ENCODE measurements at regions of chr12 and their contacts with region 1.

Region 1: GRCh38 chr12:26119391-26119981 is 5.4 kb downstream of the BHLHE41 start:
- DNase-seq: peak; percentile 70
- ATAC-seq: no peak
- H3K4me3 ChIP-seq: no peak overlapping the region
- H3K4me3 Mint-ChIP-seq: peak overlapping the region; percentile 53
- H3K27ac ChIP-seq: peak overlapping the region in 1 of 2 donors; percentile 6
- H3K27ac Mint-ChIP-seq: peak overlapping the region; percentile 57
- H3K4me1 ChIP-seq: peaks cover 66 to 72% of the 10 kb centered on the region in 2 donors
- H3K4me1 Mint-ChIP-seq: peaks cover 74% of the 10 kb centered on the region
- H3K27me3 ChIP-seq: peaks cover 0 to 10% (median 0%) of the 10 kb centered on the region in 4 experiments
- H3K27me3 Mint-ChIP-seq: no peaks in the 10 kb centered on the region
- CTCF ChIP-seq: peak; percentile 62

Region 2: DNA sequence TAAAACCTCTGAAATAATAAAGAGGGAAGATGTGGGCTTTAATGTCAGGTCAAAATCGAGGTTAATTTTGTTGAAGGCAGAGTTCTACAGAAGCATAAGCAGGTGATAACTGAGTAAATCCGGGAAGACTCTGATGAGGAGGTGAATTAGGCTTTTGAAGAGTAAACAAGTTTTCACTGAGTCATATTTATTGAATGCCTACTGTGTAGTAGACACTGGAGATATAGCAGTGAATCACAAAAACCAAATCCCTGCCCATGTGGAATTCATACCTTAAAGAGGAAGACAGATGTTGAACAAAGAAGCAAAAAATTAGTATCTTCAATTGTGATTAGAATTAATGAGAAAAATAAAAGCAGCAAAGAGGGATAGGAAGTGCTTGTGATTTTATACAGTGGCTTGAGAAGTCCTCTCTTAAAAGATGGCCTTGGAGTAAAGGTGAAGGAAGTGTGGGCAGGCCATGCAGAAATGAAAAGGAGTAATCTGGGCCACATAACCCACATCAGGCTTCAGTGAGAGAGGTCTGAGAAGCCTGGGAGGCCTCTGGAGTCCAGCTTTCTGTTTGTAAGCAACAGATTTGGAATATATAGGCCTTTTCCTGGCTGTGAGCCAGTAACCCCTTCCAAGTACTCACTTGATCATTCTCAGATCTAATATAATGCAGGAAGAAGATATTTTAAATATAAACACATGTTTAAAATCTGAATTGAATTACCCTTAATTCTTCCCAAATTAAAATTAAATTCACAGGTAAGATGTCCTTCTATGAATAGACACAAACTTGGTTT is 41.4 kb before region 1 on chr12:
- CTCF ChIA-PET with region 1: no interaction called
- POLR2A ChIA-PET with region 1: no interaction called
- intact Hi-C with region 1: no loop called
- DNase-seq: no peak
- ATAC-seq: no peak
- H3K4me3 ChIP-seq: no peak overlapping the region
- H3K4me3 Mint-ChIP-seq: no peak overlapping the region
- H3K27ac ChIP-seq: no peak overlapping the region
- H3K27ac Mint-ChIP-seq: no peak overlapping the region
- H3K4me1 ChIP-seq: no peaks in the 10 kb centered on the region
- H3K4me1 Mint-ChIP-seq: no peaks in the 10 kb centered on the region
- H3K27me3 ChIP-seq: no peaks in the 10 kb centered on the region
- H3K27me3 Mint-ChIP-seq: no peaks in the 10 kb centered on the region
- CTCF ChIP-seq: no peak

Region 3: GRCh38 chr12:26274441-26275312 is 155.2 kb after region 1 on chr12:
- CTCF ChIA-PET with region 1: interaction called, 12 read pairs
- POLR2A ChIA-PET with region 1: interaction called, 7 read pairs
- intact Hi-C with region 1: loop called (anchors 1 kb)
- DNase-seq: peak; percentile 58
- ATAC-seq: peak; percentile 96
- H3K4me3 ChIP-seq: no peak overlapping the region
- H3K4me3 Mint-ChIP-seq: peak overlapping the region; percentile 18
- H3K27ac ChIP-seq: no peak overlapping the region
- H3K27ac Mint-ChIP-seq: peak overlapping the region; percentile 78
- H3K4me1 ChIP-seq: peaks cover 16 to 28% of the 10 kb centered on the region in 2 donors
- H3K4me1 Mint-ChIP-seq: peaks cover 43% of the 10 kb centered on the region
- H3K27me3 ChIP-seq: no peaks in the 10 kb centered on the region
- H3K27me3 Mint-ChIP-seq: no peaks in the 10 kb centered on the region
- CTCF ChIP-seq: no peak

Region 4: DNA sequence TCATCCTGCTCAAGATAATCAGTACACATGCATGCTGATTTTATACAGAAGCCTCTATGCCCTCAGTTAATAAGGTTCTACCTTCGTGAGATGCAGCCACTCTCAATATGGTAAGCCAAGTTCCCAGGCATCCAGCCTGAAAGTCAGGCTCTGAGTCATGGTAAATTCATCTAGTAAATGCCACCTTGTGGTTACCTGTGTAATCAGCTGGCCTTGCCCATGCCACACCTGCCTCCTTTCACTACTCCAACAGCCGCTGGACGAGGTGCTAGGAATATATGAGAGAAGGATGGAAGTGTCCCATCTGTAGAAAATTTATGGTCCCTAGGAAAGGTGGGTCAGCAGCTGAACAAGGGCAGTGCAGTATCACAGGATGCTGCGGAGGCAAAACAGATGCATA is 283.2 kb after region 1 on chr12:
- CTCF ChIA-PET with region 1: interaction called, 55 read pairs
- POLR2A ChIA-PET with region 1: no interaction called
- intact Hi-C with region 1: loop called (anchors 1 kb)
- DNase-seq: peak; percentile 43
- ATAC-seq: peak; percentile 53
- H3K4me3 ChIP-seq: no peak overlapping the region
- H3K4me3 Mint-ChIP-seq: no peak overlapping the region
- H3K27ac ChIP-seq: no peak overlapping the region
- H3K27ac Mint-ChIP-seq: no peak overlapping the region
- H3K4me1 ChIP-seq: peaks cover 0 to 4% of the 10 kb centered on the region in 2 donors
- H3K4me1 Mint-ChIP-seq: peaks cover 2% of the 10 kb centered on the region
- H3K27me3 ChIP-seq: no peaks in the 10 kb centered on the region
- H3K27me3 Mint-ChIP-seq: no peaks in the 10 kb centered on the region
- CTCF ChIP-seq: peak; percentile 38

Region 5: DNA sequence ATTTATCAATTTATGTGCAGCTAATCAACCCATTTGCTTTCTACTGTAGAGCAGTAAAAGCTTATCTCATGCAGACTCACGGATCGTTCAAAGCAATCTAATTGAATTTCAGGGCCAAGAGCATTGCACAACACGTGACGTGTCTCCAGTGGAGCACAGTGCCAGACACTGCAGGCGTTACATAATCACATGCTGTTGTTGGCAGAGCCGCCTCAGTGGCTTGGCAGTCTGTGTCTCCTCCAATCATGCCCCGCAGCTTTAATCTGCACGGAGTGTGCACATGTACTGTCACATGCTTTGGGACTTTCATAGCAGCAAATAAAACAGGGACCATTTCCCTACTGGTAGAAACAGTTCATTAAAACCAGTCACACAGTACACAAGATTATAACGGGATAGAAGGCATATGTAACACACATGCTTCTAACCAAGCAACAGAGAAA is 404.2 kb after region 1 on chr12:
- CTCF ChIA-PET with region 1: interaction called, 58 read pairs
- POLR2A ChIA-PET with region 1: no interaction called
- intact Hi-C with region 1: loop called (anchors 2 kb)
- DNase-seq: no peak
- ATAC-seq: no peak
- H3K4me3 ChIP-seq: no peak overlapping the region
- H3K4me3 Mint-ChIP-seq: no peak overlapping the region
- H3K27ac ChIP-seq: no peak overlapping the region
- H3K27ac Mint-ChIP-seq: no peak overlapping the region
- H3K4me1 ChIP-seq: peaks cover 5 to 6% of the 10 kb centered on the region in 2 donors
- H3K4me1 Mint-ChIP-seq: peaks cover 10% of the 10 kb centered on the region
- H3K27me3 ChIP-seq: no peaks in the 10 kb centered on the region
- H3K27me3 Mint-ChIP-seq: no peaks in the 10 kb centered on the region
- CTCF ChIP-seq: no peak

Region 6: GRCh38 chr12:26651566-26652188 is 532.2 kb after region 1 on chr12:
- CTCF ChIA-PET with region 1: interaction called, 8 read pairs
- POLR2A ChIA-PET with region 1: no interaction called
- intact Hi-C with region 1: loop called (anchors 1 kb)
- DNase-seq: peak; percentile 64
- ATAC-seq: peak; percentile 57
- H3K4me3 ChIP-seq: no peak overlapping the region
- H3K4me3 Mint-ChIP-seq: no peak overlapping the region
- H3K27ac ChIP-seq: no peak overlapping the region
- H3K27ac Mint-ChIP-seq: no peak overlapping the region
- H3K4me1 ChIP-seq: no peaks in the 10 kb centered on the region
- H3K4me1 Mint-ChIP-seq: no peaks in the 10 kb centered on the region
- H3K27me3 ChIP-seq: no peaks in the 10 kb centered on the region
- H3K27me3 Mint-ChIP-seq: no peaks in the 10 kb centered on the region
- CTCF ChIP-seq: peak; percentile 85

Measured in B cell (primary cell).